A673 (cell line): ENCODE measurements at regions of chr13 and their contacts with region 1.

Region 1: DNA sequence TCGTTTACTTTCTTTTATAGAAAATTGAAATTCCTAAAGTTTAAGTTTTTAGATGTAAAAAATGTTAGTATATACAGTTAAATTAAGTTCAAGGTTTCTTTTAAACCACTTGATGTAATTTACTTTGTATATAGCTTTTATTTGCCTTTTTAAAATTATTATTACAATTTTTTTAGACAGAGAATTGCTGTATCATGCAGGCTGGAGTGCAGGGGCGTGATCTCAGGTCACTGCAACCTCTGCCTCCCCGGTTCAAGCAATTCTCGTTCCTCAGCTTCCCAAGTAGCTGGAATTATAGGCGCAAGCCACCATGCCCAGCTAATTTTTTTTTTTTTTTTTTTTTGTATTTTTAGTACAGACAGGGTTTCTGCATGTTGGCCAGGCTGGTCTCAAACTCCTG is 75.0 kb downstream of the KCNRG start:
- DNase-seq: no peak
- H3K4me3 ChIP-seq: no peak overlapping the region
- H3K27ac ChIP-seq: no peak overlapping the region
- H3K4me1 ChIP-seq: peaks cover 6% of the 10 kb centered on the region
- H3K27me3 ChIP-seq: no peaks in the 10 kb centered on the region
- CTCF ChIP-seq: no peak

Region 2: GRCh38 chr13:48626077-48626449 is 1464.1 kb before region 1 on chr13:
- CTCF ChIA-PET with region 1: no interaction called
- POLR2A ChIA-PET with region 1: no interaction called
- intact Hi-C with region 1: no loop called
- DNase-seq: no peak
- H3K4me3 ChIP-seq: no peak overlapping the region
- H3K27ac ChIP-seq: no peak overlapping the region
- H3K4me1 ChIP-seq: no peaks in the 10 kb centered on the region
- H3K27me3 ChIP-seq: no peaks in the 10 kb centered on the region
- CTCF ChIP-seq: no peak

Region 3: DNA sequence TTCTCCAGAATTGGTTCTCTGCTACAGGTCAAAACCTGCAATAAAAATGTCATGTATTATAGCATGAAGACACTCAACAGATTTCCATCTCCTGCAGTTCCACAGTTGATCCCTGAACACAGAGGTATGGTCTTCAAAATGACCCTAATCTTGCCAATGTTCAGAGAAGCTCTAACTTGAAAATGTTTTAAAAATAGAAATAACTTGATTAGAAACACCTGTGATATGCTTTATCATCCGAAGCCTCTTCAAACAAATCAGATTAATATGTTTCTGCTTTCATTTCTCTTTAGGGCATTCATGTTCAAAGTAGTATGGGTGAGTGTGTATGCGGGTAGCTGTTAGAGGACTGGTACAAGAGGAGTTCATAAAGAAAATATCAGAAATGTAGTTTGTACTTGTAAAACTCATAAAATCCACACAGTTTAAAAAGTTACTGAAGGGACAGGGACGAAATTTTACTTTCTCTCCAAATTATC is 14.6 kb before region 1 on chr13:
- CTCF ChIA-PET with region 1: no interaction called
- POLR2A ChIA-PET with region 1: interaction called, 12 read pairs
- intact Hi-C with region 1: no loop called
- DNase-seq: no peak
- H3K4me3 ChIP-seq: no peak overlapping the region
- H3K27ac ChIP-seq: no peak overlapping the region
- H3K4me1 ChIP-seq: peaks cover 59% of the 10 kb centered on the region
- H3K27me3 ChIP-seq: no peaks in the 10 kb centered on the region
- CTCF ChIP-seq: no peak